Activated T-helper 1 cell treated with anti-CD3 and anti-CD28 coated beads, Interleukin-12 subunit alpha, Interleukin-12 subunit beta, Interleukin-2, Interleukin-4 antibody, amounts not matched to agents 30 ng/mL and 10 ng/mL and 1 ng/mL, durations not matched to agents 14 hours and 24 hours and 36 hours (primary cell): ENCODE measurements at regions of chr12 and their contacts with region 1.

Region 1: DNA sequence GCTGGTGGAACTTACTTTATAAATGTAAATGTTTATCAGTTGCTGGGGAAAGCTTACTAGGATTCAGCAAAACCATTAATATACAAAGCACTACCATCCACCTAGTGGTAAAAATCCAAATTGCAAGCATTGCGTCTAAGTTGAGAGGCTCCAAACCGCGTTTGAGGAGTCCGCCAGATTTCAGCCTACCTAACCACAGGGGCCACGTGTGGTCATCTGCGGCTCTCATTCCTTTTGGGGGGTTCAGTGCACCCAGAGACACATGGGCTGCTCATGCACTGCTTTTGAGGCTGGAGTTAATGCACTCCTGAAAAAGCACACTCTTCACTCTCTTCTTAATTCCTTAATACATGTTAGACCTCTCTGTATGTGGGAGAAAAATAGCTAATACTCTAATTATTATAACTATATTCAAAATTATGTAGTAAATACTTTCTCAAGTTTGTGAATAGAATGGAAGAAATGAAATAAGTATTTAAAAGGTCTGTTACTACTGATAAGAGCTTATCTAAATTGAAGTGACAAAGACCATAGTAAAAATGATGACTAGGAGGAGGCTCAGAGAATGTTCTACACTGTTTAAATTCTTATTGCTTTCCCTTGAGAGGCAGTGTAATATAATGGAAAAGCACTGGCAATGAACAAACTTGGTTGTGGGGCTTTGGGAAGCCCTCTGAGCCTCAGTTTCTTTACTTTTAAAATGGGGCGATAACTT is 41.4 kb upstream of the MANSC4 start:
- DNase-seq: peak; percentile 33
- H3K4me3 Mint-ChIP-seq: peak overlapping the region; percentile 32
- H3K27ac Mint-ChIP-seq: peak overlapping the region; percentile 91
- H3K4me1 Mint-ChIP-seq: peaks cover 71% of the 10 kb centered on the region
- H3K27me3 Mint-ChIP-seq: peaks cover 22% of the 10 kb centered on the region

Region 2: DNA sequence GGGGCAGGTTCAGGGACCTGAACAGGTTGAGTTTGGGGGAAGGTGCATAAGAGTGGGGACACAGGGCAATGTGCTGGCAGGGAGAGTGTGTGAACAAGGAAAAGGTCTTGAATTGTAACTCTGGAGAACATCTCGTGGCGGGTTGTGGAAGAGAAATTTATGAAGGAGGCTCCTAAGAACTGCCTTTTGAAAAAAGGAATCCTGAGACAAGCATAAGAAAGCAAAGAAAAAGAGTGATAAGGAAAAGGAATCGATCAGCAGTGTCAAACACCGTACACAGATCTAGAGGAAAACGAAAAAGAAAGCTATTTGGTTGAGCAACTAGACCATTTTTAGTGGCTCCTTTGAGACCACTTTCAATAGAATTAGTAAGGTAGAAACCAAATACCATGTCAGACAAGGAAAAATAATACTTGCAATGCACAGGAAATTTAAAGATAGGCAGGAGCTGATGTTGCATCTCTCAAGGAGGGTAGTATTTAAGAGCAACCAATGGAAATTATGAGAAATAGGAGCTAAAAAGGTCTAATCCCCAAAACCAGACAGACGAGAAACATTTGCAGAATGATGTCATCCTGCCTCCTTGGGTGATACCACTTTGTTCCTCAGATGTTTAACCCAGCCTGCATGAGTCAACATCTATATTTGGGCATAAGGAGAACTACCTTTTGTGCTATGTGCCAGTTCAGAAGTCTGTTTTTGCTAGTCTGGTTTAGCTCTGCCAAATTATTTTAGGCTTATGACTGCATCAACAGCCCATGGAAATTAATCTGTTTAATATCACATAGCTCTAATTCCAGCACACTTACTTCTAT is 641.8 kb before region 1 on chr12:
- intact Hi-C with region 1: loop called (anchors 1 kb)
- DNase-seq: peak; percentile 25
- H3K4me3 Mint-ChIP-seq: peak overlapping the region; percentile 19
- H3K27ac Mint-ChIP-seq: peak overlapping the region; percentile 66
- H3K4me1 Mint-ChIP-seq: peaks cover 53% of the 10 kb centered on the region
- H3K27me3 Mint-ChIP-seq: no peaks in the 10 kb centered on the region

Region 3: GRCh38 chr12:27534060-27534764 is 287.2 kb before region 1 on chr12:
- intact Hi-C with region 1: loop called (anchors 5 kb)
- DNase-seq: peak; percentile 16
- H3K4me3 Mint-ChIP-seq: peak overlapping the region; percentile 40
- H3K27ac Mint-ChIP-seq: peak overlapping the region; percentile 66
- H3K4me1 Mint-ChIP-seq: peaks cover 77% of the 10 kb centered on the region
- H3K27me3 Mint-ChIP-seq: peaks cover 4% of the 10 kb centered on the region

Region 4: DNA sequence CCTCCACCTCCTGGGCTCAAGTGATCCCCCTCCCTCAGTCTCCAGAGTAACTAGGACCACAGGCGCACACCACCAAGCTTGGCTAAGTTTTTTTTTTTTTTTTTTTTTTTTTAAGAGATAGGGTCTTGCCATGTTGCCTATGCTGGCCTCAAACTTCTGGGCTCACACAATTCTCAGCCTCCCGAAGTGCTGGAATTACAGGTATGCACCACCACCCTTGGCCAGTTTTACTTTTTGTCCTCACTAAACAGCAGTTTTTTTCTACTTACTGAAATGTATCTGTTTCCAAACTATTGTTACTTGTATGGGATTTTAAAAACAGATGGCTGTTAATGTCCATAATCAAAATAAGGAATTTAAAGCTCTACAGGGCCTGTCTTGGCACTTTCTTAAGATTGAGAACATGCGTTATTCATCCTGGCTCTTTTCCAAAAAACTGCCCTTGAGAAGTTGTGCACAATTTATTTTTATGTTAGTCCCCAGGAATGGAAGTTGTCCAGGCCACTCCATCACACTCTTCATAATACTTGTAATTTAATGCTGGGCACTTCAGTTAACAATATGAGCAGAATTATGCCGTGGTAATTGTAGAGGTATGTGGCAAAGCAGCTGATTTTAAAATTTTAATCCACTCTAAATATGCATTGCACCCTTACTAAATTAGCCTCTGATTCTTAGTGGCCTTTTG is 177.1 kb before region 1 on chr12:
- intact Hi-C with region 1: no loop called
- DNase-seq: no peak
- H3K4me3 Mint-ChIP-seq: no peak overlapping the region
- H3K27ac Mint-ChIP-seq: no peak overlapping the region
- H3K4me1 Mint-ChIP-seq: no peaks in the 10 kb centered on the region
- H3K27me3 Mint-ChIP-seq: peaks cover 2% of the 10 kb centered on the region

Region 5: DNA sequence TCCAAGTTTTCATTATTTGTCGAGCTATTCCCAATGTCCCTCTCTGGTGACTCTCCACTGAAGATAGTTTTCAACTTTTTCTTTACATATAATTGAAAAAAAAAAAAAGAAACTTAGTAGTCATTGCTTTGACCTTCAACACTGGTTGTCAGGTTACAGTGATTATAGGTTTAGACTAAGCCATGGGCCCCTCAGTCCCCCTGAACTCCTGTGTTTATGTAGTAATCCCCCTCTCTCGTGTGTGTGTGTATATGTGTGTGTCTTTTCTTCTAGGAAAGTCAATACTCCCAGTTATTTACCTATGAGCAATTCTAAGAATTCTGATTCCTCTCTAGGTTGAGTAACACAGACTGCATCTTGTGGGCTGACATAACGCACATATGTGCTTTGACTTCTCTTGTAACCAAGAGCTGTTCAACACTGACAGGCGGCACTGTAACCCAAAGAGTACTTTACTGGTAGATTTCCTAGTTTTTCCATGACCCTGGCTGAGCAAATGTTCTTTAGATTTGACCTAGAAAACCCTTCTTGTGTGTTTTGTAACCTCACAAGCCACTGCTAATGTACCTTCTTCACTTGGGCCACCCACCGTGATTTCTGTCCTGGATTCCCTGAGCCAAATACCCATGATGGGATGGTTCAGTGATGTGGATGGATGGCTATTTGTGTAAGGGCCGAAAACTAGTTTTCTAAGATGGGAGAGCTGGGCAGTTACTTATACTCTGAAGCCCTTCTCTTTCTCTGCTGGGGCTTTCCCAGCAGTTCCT is 26.4 kb before region 1 on chr12:
- intact Hi-C with region 1: no loop called
- DNase-seq: no peak
- H3K4me3 Mint-ChIP-seq: no peak overlapping the region
- H3K27ac Mint-ChIP-seq: peak overlapping the region; percentile 72
- H3K4me1 Mint-ChIP-seq: peaks cover 19% of the 10 kb centered on the region
- H3K27me3 Mint-ChIP-seq: no peaks in the 10 kb centered on the region

Region 6: GRCh38 chr12:27807063-27807703 is 14.2 kb before region 1 on chr12:
- intact Hi-C with region 1: loop called (anchors 1 kb)
- DNase-seq: no peak
- H3K4me3 Mint-ChIP-seq: no peak overlapping the region
- H3K27ac Mint-ChIP-seq: peak overlapping the region; percentile 53
- H3K4me1 Mint-ChIP-seq: peaks cover 36% of the 10 kb centered on the region
- H3K27me3 Mint-ChIP-seq: peaks cover 11% of the 10 kb centered on the region

Region 7: GRCh38 chr12:28190321-28191050 is 369.1 kb after region 1 on chr12 and contains the start of gene CCDC91:
- intact Hi-C with region 1: loop called (anchors 1 kb)
- DNase-seq: peak; percentile 79
- H3K4me3 Mint-ChIP-seq: peak within 1 kb of the TSS; percentile 91
- H3K27ac Mint-ChIP-seq: peak within 1 kb of the TSS; percentile 96
- H3K4me1 Mint-ChIP-seq: peaks cover 39% of the 10 kb centered on the region
- H3K27me3 Mint-ChIP-seq: no peaks in the 10 kb centered on the region
- total RNA-seq, gene CCDC91: 12.9 and 15.0 TPM in 2 replicates

Region 8: DNA sequence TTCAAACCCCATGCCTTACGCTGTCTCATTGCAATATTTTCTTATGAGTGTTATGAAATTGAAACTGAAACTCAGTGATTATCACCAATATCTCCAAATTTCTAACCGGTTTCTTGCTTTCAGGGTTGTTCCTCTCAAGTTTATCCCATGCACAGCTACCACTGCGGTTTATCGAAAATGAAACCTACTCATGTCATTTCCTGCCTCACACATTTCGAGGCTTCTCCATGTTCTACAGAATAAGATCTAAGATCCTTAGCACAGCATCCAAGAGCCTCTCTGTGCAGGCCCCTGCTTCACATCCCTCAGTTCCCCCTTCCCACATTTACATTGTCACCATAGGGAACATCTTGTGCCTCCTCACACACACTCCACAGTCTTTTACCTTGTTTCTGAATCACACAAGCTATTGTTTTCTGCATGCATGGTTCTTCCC is 1282.1 kb after region 1 on chr12:
- intact Hi-C with region 1: loop called (anchors 1 kb)
- DNase-seq: peak; percentile 58
- H3K4me3 Mint-ChIP-seq: peak overlapping the region; percentile 34
- H3K27ac Mint-ChIP-seq: peak overlapping the region; percentile 75
- H3K4me1 Mint-ChIP-seq: peaks cover 31% of the 10 kb centered on the region
- H3K27me3 Mint-ChIP-seq: peaks cover 10% of the 10 kb centered on the region